ENCODE measurements at regions of chr20 and their contacts with region 1.

Region 1: DNA sequence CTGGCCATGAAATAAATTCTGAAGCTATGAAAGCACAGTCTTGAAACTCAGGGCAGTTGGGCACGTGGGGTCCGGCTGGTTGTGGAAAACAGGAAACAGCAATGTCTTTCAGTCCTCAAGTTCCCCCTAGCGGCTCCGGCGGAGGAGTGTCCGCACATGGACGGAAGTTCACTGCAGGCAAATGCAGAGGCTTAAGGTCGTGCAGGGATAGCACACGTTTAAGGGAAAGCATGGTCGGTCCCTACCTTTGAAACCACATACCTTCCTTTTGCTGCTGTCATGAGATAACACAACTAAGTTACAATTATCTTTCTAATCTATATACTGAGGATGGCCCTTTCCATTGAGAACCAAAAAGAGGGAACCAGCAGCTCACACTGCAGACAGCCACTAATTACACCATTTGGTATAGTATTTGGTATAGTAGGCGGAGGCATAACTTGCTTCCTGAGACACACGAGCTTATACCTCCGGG is 52.6 kb upstream of the NFATC2 start:
- DNase-seq: peak; percentile 94
- ATAC-seq: peak; percentile 93
- H3K4me3 ChIP-seq: no peak overlapping the region
- H3K27ac ChIP-seq: no peak overlapping the region
- H3K4me1 ChIP-seq: no peaks in the 10 kb centered on the region
- H3K27me3 ChIP-seq: no peaks in the 10 kb centered on the region

Region 2: GRCh38 chr20:50992733-50993457 is 602.2 kb before region 1 on chr20:
- intact Hi-C with region 1: loop called in 1 of 2 experiments (anchors 10 kb)
- DNase-seq: no peak
- ATAC-seq: no peak
- H3K4me3 ChIP-seq: no peak overlapping the region
- H3K27ac ChIP-seq: no peak overlapping the region
- H3K4me1 ChIP-seq: no peaks in the 10 kb centered on the region
- H3K27me3 ChIP-seq: no peaks in the 10 kb centered on the region

Region 3: DNA sequence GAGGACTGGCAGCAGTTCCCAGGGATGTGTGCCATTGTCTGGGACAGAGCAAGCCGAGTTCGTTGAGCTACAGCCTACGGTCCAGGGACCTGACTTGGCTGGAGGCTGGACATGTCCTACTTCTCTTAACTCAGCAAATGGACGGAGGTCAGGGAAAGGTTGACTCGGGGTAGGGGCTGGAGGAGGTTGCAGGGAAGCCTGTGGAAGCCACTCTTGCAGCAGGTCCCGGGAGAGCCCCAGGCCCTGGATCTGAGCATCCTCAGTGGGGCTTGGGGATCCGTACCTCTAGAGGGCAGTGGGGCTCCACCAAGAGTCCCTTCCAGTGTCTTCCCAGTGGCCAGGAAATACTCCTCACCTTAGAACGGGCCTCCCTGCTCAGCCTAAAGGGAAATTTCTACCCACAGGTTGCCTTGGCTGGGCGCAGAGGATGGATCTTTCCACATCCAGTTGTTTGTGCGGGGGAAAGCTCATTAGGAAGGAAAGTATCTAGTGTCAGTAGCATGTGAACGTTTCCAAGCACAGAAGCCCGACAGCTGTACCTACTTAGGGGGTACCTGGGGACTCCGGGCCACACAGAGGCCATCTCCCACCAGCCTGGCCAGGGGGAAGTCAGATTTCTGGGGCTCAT is 222.8 kb before region 1 on chr20:
- intact Hi-C with region 1: loop called (anchors 1 to 5 kb)
- DNase-seq: peak; percentile 61 to 84
- ATAC-seq: peak; percentile 78
- H3K4me3 ChIP-seq: no peak overlapping the region
- H3K27ac ChIP-seq: no peak overlapping the region
- H3K4me1 ChIP-seq: no peaks in the 10 kb centered on the region
- H3K27me3 ChIP-seq: no peaks in the 10 kb centered on the region

Region 4: DNA sequence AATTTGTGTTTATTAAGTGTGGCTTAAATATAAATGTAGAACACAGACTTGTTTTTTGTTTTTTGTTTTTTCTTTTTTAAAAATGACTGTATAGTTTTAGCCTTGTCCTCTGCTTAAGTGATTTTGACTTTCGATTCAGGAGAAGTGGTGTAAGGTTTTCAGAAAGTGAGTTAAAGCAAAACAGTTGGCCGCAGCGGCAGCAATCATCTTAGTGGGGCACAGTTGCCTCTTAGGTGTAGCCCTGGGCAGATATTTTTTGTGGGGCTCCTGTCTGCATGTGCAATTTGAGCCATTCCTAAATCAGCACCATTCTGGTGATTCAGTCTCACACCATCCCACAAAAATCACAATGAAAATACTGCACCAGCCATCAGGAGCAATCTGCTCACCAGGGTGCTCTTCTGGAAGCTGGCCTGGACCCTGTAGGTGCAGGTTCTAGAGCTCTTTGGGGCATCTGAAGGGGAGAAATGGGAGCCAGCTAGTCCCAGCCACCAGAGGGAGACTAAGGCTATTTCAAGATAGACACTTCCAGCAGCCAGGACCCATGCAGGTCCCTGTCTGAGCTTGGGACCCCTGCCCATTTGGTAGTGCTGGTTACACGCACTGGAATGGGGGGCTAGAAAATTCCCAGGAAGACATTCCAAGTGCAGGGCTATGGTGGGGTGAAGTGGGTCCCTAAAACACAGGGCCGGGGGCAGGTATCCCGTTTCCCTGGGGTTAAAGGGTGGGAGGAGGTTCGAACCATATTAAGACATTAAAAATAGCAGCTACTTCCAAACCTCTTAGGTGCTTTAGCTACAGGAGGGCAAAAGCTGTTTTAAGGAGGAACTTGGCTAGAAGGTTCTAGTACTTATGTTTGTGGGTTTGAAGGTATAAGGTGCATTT is 209.2 kb before region 1 on chr20:
- intact Hi-C with region 1: loop called in 1 of 2 experiments (anchors 5 kb)
- DNase-seq: peak in 1 of 2 donors; percentile 48
- ATAC-seq: no peak
- H3K4me3 ChIP-seq: no peak overlapping the region
- H3K27ac ChIP-seq: no peak overlapping the region
- H3K4me1 ChIP-seq: no peaks in the 10 kb centered on the region
- H3K27me3 ChIP-seq: no peaks in the 10 kb centered on the region

Measured in aorta (tissue), 5 donors.